Spleen (tissue), 13 donors: ENCODE measurements at regions of chr1 and their contacts with region 1.

Region 1: DNA sequence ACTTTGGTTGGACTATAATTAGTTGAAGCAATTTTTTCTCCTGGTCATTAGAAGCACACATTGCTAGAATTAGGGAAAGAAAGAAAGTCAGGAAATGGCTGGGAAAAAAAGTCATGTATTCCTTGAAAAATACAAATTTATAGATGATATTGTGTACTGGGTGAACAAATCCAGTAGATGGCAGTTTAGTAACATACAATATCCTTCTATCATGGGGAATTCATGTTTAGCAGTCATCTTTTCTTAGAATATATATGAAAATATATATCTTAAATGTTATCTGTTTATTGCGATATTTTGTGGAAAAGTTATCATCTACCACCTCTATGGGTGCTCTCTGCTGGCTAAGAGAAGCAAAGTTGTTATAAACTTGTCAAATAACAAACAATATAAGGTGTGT is 13.1 kb upstream of the ZRANB2 start:
- DNase-seq: no peak
- H3K4me3 ChIP-seq: no peak overlapping the region
- H3K27ac ChIP-seq: no peak overlapping the region
- H3K4me1 ChIP-seq: no peaks in the 10 kb centered on the region
- H3K27me3 ChIP-seq: no peaks in the 10 kb centered on the region
- CTCF ChIP-seq: no peak
- POLR2A ChIP-seq: no peak

Region 2: DNA sequence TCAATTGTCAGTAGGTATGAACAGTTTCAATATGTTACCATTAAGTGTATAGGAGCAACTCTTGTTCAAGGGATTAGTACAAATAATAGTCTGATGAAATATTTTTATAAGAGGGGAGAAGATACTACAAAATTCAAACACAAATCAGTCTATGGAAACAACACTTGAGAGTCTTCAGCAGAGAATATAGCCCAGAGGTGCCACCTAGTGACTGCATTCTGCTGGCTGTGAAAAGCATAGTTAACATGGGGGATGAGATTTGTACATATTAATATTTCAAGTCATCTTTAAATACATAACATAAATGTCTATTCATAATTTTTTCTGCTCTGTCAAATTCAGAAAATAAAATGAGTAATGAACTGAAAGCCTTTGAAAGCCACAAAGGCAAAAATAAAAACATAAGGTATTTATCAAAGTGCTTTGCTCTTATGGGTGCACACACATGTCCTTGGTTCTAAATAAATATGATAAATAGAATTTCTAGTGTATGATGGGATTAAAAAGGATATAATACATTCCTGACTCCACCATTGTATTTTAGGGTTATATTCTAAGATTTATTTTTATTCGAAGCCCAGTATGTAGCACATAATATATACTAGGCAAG is 427.8 kb after region 1 on chr1:
- intact Hi-C with region 1: loop called (anchors 10 kb)
- DNase-seq: no peak
- H3K4me3 ChIP-seq: no peak overlapping the region
- H3K27ac ChIP-seq: no peak overlapping the region
- H3K4me1 ChIP-seq: no peaks in the 10 kb centered on the region
- H3K27me3 ChIP-seq: no peaks in the 10 kb centered on the region
- CTCF ChIP-seq: peak in 6 of 11 experiments; percentile 7 to 31 (median 18)
- POLR2A ChIP-seq: no peak